PC-3 (cell line): ENCODE measurements at regions of chr15 and their contacts with region 1.

Region 1: DNA sequence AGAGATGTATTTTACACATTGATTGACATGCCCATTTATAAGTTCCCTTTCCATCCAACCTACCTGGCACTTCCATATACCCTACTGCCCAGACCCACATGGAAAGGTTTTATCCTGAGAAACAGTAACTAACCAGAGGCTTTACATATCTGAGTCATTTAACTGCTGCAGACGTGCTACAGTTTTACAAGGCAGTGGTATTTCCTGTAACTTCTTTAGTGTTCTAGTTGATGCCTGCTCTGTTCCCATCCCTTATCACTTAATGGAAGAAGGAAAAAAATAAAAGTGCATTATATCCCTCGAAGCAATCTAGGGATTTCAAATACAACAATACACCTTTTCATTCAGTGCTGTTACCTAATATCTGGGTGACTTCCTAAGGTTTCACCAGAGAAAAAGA is 107.1 kb downstream of the TMCO5A start:
- DNase-seq: peak; percentile 78
- ATAC-seq: peak; percentile 70
- H3K4me3 ChIP-seq: no peak overlapping the region
- H3K27ac ChIP-seq: peak overlapping the region; percentile 72
- H3K4me1 ChIP-seq: peaks cover 58% of the 10 kb centered on the region
- H3K27me3 ChIP-seq: no peaks in the 10 kb centered on the region
- CTCF ChIP-seq: no peak

Region 2: GRCh38 chr15:37995461-37996347 is 45.9 kb before region 1 on chr15:
- CTCF ChIA-PET with region 1: no interaction called
- POLR2A ChIA-PET with region 1: no interaction called
- intact Hi-C with region 1: no loop called
- DNase-seq: peak; percentile 73
- ATAC-seq: peak; percentile 83
- H3K4me3 ChIP-seq: peak overlapping the region; percentile 6; the same call in 1 of the 2 replicates
- H3K27ac ChIP-seq: no peak overlapping the region
- H3K4me1 ChIP-seq: peaks cover 7% of the 10 kb centered on the region; the same call in 1 of the 2 replicates
- H3K27me3 ChIP-seq: no peaks in the 10 kb centered on the region
- CTCF ChIP-seq: peak; percentile 92

Region 3: DNA sequence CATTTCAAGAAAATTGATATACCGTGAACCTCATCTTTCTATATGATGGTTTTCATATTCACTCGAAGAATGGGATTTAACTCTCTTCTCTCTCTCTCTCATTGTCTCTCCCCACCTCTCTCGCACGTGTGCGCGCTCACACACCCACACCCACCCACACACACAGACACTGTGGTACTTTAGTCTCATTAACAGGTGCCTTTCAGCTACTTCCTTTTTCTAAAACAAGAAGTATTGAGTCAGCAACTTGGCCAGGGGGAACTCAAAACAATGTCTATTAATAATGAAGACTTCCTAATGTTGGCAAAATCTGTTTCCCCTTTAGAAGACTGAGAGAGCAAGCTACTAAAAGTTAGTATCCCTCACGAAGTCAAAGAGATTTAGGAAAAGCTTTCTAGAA is 43.5 kb after region 1 on chr15:
- CTCF ChIA-PET with region 1: no interaction called
- POLR2A ChIA-PET with region 1: no interaction called
- intact Hi-C with region 1: loop called (anchors 1 kb)
- DNase-seq: no peak
- ATAC-seq: no peak
- H3K4me3 ChIP-seq: no peak overlapping the region
- H3K27ac ChIP-seq: no peak overlapping the region
- H3K4me1 ChIP-seq: peaks cover 14% of the 10 kb centered on the region
- H3K27me3 ChIP-seq: no peaks in the 10 kb centered on the region
- CTCF ChIP-seq: no peak